ENCODE measurements at regions of chr17 and their contacts with region 1.

Region 1: DNA sequence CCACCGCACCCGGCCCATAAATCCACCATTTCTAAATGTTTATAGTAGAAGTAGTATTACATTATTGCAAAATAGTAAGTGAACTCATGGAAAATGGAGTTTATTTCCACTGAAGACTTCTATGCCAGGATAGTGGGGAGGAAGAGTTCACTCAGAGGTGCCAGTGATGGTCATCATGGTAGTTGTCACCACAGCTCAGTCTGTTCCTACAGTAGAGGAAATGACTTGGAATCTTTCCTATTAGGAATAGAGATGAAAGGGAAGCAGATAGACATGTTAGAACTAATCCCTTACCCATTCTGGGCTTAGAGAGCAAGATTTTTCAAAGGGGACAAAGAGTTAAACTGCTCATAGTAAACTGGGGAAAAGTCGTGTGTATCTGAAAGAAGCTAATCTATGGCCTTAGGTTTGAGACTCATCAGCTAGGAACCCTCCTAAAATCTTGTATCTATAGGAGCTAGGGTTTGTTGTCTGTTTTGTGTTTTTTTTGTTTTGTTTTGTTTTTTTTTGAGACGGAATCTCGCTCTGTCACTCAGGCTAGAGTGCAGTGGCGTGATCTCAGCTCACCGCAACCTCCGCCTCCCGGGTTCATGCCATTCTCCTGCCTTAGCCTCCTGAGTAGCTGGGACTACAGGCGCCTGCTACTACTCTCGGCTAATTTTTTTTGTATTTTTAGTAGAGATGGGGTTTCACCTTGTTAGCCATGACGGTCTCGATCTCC is 20.3 kb downstream of the MRPL45 start:
- DNase-seq: no peak
- H3K4me3 ChIP-seq: no peak overlapping the region
- H3K27ac ChIP-seq: no peak overlapping the region
- H3K4me1 ChIP-seq: peaks cover 6% of the 10 kb centered on the region in 2 donors
- H3K27me3 ChIP-seq: no peaks in the 10 kb centered on the region
- CTCF ChIP-seq: no peak
- POLR2A ChIP-seq: no peak

Region 2: DNA sequence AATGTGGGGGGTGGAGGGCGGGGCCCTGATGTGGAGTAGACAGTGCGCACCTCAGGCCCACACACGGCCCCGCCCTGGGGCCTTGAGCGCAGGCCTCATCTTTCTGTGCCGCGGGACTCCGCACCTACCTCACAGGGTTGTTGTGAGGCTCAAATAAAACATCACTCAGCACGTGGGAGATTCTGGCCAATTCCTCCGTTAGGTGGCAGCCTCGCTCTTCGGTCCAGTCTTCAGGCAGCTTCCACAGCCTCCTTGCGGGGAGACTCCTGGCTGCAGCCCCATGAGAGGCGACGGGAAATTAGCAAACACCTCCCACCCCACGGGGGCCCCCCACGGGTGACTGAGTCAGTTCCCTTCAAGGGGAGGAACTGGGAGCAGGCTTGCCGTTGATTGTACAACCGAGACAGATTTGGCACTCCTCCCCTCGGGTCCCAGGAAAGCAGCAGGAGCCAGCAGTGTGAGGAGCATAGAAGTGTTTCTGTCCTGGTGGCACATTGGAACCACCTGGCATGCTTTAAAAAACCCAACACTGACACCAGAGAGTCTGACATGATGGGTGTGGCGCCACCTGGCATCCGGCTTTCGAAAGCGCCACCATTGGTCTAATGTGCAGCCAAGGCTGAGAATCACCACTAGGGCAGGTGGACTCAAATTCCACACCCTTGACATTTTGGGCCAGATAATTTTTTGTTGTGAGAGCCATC is 1708.3 kb before region 1 on chr17:
- intact Hi-C with region 1: loop called (anchors 5 kb)
- DNase-seq: no peak
- H3K4me3 ChIP-seq: peak overlapping the region in 1 of 3 donors; percentile 7
- H3K27ac ChIP-seq: no peak overlapping the region
- H3K4me1 ChIP-seq: no peaks in the 10 kb centered on the region
- H3K27me3 ChIP-seq: no peaks in the 10 kb centered on the region
- CTCF ChIP-seq: peak in 1 of 3 donors; percentile 13
- POLR2A ChIP-seq: no peak

Region 3: GRCh38 chr17:37476431-37477120 is 840.7 kb before region 1 on chr17:
- intact Hi-C with region 1: no loop called
- DNase-seq: peak in 1 of 2 donors; percentile 90
- H3K4me3 ChIP-seq: no peak overlapping the region
- H3K27ac ChIP-seq: peak overlapping the region; percentile 76 to 89
- H3K4me1 ChIP-seq: peaks cover 4 to 8% of the 10 kb centered on the region in 2 donors
- H3K27me3 ChIP-seq: no peaks in the 10 kb centered on the region
- CTCF ChIP-seq: no peak
- POLR2A ChIP-seq: no peak

Measured in breast epithelium (tissue), 4 donors.